ENCODE measurements at regions of chr10 and their contacts with region 1.

Region 1: DNA sequence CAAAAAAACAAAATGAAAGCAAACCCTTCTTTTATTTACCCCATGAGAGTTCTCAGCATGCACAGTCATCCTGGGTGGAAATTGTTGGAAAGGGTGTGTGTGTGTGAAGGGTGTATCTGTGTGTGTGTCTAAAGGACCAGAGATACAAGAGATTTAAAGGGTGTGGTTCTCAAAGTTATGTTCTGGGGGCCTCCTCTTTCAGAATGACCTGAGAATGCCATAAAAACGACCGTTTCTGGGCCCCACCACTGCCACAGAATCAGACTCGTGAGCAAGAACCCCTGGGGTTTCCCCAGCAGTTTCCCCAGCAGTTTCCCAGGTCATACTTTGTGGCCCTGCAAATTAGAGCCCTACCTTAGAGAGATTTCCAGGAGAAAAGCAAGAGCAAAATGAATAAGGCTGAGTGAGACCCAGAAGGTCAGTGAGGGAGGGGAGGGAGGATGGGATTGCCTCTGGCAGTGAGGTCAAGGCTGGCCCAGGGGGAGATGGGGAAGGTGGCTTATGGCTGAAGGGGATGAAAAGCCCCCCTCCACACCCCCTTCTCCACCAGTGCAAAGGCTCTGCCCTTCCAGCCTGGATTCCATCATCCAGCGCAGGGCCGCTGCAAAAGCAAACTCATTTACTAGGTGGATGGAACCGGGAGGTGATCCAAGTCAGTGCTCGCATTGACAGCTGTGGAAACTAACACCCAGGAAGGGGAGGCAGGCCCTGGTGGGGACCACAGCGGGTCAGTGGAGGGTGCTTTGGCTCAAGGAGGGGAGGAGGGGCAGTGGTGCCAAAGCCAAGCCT is 10.2 kb downstream of the PYROXD2 start:
- DNase-seq: peak; percentile 35
- H3K4me3 Mint-ChIP-seq: no peak overlapping the region
- H3K27ac Mint-ChIP-seq: peak overlapping the region; percentile 53
- H3K4me1 Mint-ChIP-seq: peaks cover 20% of the 10 kb centered on the region
- H3K27me3 Mint-ChIP-seq: no peaks in the 10 kb centered on the region

Region 2: GRCh38 chr10:98391578-98391991 is 13.2 kb before region 1 on chr10:
- CTCF ChIA-PET with region 1: interaction called, 7 read pairs
- POLR2A ChIA-PET with region 1: interaction called, 16 read pairs
- DNase-seq: peak; percentile 59
- H3K4me3 Mint-ChIP-seq: peak overlapping the region; percentile 50
- H3K27ac Mint-ChIP-seq: peak overlapping the region; percentile 86
- H3K4me1 Mint-ChIP-seq: peaks cover 53% of the 10 kb centered on the region
- H3K27me3 Mint-ChIP-seq: no peaks in the 10 kb centered on the region

Region 3: DNA sequence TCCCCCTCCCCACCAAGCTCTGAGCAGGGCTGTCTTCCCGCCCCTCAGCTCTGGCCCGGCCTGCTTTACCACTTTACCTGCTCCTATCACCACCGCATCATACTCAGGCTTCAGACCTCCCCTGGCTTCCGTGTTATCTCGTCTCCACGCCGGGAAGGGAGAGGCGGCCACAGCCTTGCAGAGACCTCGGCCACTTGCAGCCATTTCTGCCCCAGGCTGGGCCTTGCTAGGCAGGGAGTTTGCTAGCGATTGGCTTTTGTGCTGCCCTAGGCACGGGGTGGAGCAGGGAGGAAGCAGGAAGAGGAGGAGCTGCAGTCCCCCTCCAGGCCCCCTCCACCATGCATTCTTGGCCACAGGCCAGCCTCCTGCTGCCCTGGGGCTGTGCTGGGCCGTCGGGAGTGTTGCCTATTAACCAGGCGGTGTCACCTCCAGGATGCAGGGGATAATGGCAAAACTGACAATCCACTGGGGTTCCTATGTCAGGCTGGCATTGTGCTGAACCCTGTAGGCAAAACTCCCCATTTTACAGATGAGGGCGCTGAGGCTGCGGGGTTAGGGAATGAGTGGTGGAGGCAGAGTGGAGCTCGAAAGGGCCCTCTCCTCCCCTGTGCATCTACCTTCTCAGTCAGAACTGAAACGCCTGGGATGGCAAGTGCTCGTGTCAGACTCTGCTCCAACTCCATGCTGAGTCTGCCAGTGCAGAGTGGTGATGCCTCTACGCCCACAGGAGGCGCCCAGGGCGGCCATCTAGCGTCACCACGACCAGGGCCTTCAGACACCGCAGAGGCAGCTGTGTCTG is 10.4 kb after region 1 on chr10 and contains the start of gene PYROXD2:
- CTCF ChIA-PET with region 1: no interaction called
- POLR2A ChIA-PET with region 1: interaction called, 15 read pairs
- DNase-seq: peak; percentile 67
- H3K4me3 Mint-ChIP-seq: peak within 1 kb of the TSS; percentile 89
- H3K27ac Mint-ChIP-seq: peak within 1 kb of the TSS; percentile 92
- H3K4me1 Mint-ChIP-seq: peaks cover 16% of the 10 kb centered on the region
- H3K27me3 Mint-ChIP-seq: no peaks in the 10 kb centered on the region
- total RNA-seq, gene PYROXD2: 13.5 to 18.7 TPM

Region 4: GRCh38 chr10:98446661-98447221 is 42.0 kb after region 1 on chr10 and contains the start of gene HPS1:
- CTCF ChIA-PET with region 1: no interaction called
- POLR2A ChIA-PET with region 1: interaction called, 10 read pairs
- DNase-seq: peak; percentile 87
- H3K4me3 Mint-ChIP-seq: peak within 1 kb of the TSS; percentile 94
- H3K27ac Mint-ChIP-seq: peak within 1 kb of the TSS; percentile 84
- H3K4me1 Mint-ChIP-seq: peaks cover 44% of the 10 kb centered on the region
- H3K27me3 Mint-ChIP-seq: peaks cover 10% of the 10 kb centered on the region
- total RNA-seq, gene HPS1: 85.4 to 88.3 TPM

Region 5: DNA sequence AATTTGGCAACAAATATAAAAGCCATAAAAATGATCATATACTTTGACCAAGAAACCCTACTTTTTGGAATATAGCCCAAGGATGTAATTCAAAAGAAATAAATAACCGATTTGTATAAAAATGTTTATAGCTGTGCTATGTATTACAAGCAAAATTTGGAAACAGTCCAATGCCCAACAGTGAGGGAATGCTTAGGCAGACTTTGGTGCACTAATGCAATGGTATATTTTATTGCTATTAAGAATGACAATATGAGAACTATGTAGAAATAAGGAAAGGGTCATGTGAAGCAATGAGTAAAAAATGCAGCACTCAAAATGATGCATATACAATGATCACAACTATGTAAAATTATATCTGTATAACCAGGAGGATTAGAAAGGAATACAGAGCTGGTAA is 315.8 kb after region 1 on chr10:
- CTCF ChIA-PET with region 1: no interaction called
- POLR2A ChIA-PET with region 1: no interaction called
- DNase-seq: no peak
- H3K4me3 Mint-ChIP-seq: no peak overlapping the region
- H3K27ac Mint-ChIP-seq: no peak overlapping the region
- H3K4me1 Mint-ChIP-seq: no peaks in the 10 kb centered on the region
- H3K27me3 Mint-ChIP-seq: peaks cover 1% of the 10 kb centered on the region

Measured in activated CD4-positive, alpha-beta memory T cell treated with anti-CD3 and anti-CD28 coated beads, Interleukin-2, amount 10 ng/mL, durations not matched to agents 7 days and 5 days (primary cell).